ENCODE measurements at regions of chr9 and their contacts with region 1.

Region 1: DNA sequence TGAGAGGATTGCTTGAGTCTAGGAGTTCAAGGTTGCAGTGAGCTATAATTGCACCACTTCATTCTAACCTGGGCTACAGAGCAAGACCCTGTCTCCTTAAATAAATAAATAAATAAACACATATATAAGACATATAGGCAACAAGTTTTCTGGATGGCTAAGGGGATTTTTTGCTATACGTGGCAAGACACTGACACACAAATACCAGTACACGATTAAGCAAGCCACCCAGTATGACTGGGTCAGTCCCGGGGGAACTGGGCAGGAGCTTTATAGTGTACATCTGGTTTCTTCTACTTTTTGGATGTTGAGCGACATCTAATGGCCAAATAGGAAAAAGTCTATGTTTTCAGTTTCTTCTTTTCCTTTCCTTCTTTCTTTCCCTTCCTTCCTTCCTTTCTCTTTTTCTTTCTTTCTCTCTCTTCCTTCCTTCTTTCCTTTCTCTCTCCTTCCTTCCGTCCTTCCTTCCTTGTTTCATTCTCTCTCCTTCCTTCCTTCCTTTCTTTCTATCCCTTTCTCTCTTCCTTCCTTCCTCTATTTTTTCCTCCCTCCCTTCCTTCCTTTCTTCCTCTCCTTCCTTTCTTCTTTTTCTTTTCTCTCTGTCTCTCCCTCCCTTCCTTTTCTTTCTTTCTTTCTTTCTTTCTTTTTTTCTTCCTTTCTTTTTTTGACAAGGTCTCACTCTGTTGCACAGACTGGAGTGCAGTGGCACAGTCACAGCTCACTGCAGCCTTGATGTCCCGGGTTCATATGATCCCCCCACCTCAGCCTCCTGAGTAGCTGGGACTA is 47.0 kb upstream of the PLIN2 start:
- DNase-seq: peak; percentile 89
- H3K4me3 Mint-ChIP-seq: no peak overlapping the region
- H3K27ac Mint-ChIP-seq: no peak overlapping the region
- H3K4me1 Mint-ChIP-seq: peaks cover 7% of the 10 kb centered on the region
- H3K27me3 Mint-ChIP-seq: no peaks in the 10 kb centered on the region
- CTCF ChIP-seq: peak; percentile 56

Region 2: GRCh38 chr9:19085295-19085694 is 89.0 kb before region 1 on chr9:
- CTCF ChIA-PET with region 1: interaction called, 33 read pairs
- POLR2A ChIA-PET with region 1: no interaction called
- intact Hi-C with region 1: loop called (anchors 1 kb)
- DNase-seq: peak; percentile 25
- H3K4me3 Mint-ChIP-seq: no peak overlapping the region
- H3K27ac Mint-ChIP-seq: peak overlapping the region; percentile 31
- H3K4me1 Mint-ChIP-seq: peaks cover 7% of the 10 kb centered on the region
- H3K27me3 Mint-ChIP-seq: no peaks in the 10 kb centered on the region
- CTCF ChIP-seq: peak; percentile 32

Region 3: DNA sequence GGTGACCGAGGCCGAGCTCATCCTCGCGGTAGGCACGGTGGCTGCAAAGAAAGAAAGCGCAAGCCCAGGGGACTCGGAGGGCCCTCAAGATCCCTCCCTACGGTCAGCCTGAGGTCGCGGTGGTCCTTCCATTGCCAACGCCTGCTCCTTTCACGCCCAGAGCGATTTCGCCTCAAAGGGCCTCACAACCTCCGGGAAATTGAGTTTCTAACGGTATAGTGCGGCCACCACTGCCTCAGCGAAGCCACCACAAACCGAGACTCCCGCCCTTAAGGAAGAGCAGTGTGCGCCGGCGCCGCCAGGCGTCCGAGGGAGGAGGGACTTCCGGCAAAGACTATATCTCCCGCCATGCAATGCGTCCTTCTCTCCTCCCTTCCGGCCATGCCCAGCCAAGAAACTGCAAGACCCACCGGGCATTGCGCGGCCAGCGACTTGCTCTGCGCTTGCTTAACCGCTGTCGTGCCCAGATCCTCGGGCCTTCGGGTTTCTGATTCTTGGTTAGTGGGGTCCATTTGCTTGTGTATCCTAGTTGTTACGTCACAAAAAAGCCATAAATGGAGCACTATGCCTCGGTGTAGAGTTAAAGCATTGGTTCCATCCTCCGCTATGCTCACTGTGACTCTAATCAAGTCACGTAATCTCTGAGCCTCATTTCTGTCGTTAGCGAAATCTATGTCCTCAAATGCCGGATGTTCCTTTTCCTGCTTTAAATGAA is 71.5 kb before region 1 on chr9 and contains the start of gene HAUS6:
- CTCF ChIA-PET with region 1: interaction called, 7 read pairs
- POLR2A ChIA-PET with region 1: interaction called, 9 read pairs
- intact Hi-C with region 1: loop called (anchors 1 kb)
- DNase-seq: peak; percentile 97
- H3K4me3 Mint-ChIP-seq: peak within 1 kb of the TSS; percentile 88
- H3K27ac Mint-ChIP-seq: peak within 1 kb of the TSS; percentile 87
- H3K4me1 Mint-ChIP-seq: peaks cover 10% of the 10 kb centered on the region
- H3K27me3 Mint-ChIP-seq: no peaks in the 10 kb centered on the region
- CTCF ChIP-seq: no peak
- total RNA-seq, gene HAUS6: 15.8 and 16.2 TPM in 2 replicates

Region 4: GRCh38 chr9:19154135-19154612 is 20.1 kb before region 1 on chr9:
- CTCF ChIA-PET with region 1: interaction called, 10 read pairs
- POLR2A ChIA-PET with region 1: interaction called, 6 read pairs
- intact Hi-C with region 1: no loop called
- DNase-seq: peak; percentile 14
- H3K4me3 Mint-ChIP-seq: no peak overlapping the region
- H3K27ac Mint-ChIP-seq: no peak overlapping the region
- H3K4me1 Mint-ChIP-seq: peaks cover 7% of the 10 kb centered on the region
- H3K27me3 Mint-ChIP-seq: no peaks in the 10 kb centered on the region
- CTCF ChIP-seq: no peak

Region 5: DNA sequence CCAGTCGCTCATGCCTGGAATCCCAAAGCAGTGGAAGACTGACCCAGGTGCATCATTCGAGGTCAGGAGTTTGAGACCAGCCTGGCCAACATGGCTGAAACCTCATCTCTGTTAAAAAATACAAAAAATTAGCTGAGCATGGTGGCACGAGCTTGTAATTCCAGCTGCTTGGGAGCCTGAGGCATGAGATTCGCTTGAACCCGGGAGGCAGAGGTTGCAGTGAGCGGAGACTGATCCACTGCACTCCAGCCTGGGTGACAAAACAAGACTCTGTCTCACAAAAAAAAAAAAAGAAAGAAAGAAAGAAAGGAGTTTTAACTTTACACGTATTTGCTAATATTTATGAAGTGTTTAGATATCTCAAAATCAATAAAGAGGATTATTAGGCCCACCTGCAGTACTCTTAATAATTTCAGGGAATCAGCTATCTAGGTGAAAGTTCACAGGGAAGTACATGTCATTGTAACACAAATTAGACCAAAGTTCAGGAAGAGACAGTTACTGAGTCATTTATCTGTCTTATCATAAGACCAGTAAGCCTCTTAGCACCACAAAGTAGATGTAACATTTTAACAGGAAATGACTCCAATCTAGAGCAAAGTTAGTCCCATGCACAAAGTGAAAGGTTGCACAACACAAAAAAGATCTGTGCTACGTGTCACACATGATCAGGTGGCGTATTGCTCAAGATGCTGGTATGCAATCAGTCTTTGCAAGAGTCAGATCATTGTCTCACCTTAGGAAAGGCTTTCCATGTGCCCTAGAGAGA is 12.9 kb before region 1 on chr9:
- CTCF ChIA-PET with region 1: interaction called, 13 read pairs
- POLR2A ChIA-PET with region 1: interaction called, 4 read pairs
- intact Hi-C with region 1: no loop called
- DNase-seq: peak; percentile 96
- H3K4me3 Mint-ChIP-seq: peak overlapping the region; percentile 11
- H3K27ac Mint-ChIP-seq: peak overlapping the region; percentile 94
- H3K4me1 Mint-ChIP-seq: peaks cover 17% of the 10 kb centered on the region
- H3K27me3 Mint-ChIP-seq: no peaks in the 10 kb centered on the region
- CTCF ChIP-seq: no peak

Region 6: GRCh38 chr9:19184144-19184917 is 10.0 kb after region 1 on chr9:
- CTCF ChIA-PET with region 1: interaction called, 8 read pairs
- POLR2A ChIA-PET with region 1: interaction called, 18 read pairs
- intact Hi-C with region 1: no loop called
- DNase-seq: peak; percentile 74
- H3K4me3 Mint-ChIP-seq: peak overlapping the region; percentile 38
- H3K27ac Mint-ChIP-seq: peak overlapping the region; percentile 98
- H3K4me1 Mint-ChIP-seq: peaks cover 13% of the 10 kb centered on the region
- H3K27me3 Mint-ChIP-seq: no peaks in the 10 kb centered on the region
- CTCF ChIP-seq: no peak

Region 7: DNA sequence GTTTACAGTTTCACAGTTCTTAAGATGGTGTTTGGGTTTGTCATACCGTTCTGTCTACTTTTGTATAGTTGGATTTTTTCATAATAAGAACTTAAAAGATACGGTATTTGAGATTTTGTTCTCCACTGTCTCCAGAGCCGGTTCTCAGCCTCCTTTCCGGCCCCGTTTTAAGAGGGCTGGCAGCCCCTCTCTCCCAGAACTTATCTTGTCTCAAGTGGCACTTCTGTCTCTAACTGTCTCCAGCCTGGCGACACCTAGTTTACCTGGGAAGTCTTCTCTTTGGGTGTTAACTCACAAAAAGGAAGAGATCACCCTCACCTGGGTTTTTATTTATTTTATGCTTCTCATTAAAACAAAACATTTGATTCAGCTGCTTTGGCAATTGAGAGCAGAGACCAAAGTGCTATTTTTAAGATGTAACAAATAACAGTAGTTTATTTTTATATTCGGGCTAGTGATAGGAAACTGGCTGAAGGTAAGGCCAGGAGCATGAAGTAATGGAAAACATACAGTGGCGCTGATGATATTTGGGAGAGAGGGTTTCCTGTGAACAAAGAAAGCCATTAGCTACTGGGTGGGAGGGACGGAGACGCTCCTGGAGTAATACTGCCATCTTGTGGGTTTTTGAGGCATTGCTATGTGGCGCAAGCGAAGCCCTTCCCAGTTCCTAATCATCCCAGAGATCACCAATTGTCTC is 282.8 kb after region 1 on chr9:
- CTCF ChIA-PET with region 1: interaction called, 8 read pairs
- POLR2A ChIA-PET with region 1: no interaction called
- intact Hi-C with region 1: loop called (anchors 5 kb)
- DNase-seq: peak; percentile 80
- H3K4me3 Mint-ChIP-seq: peak overlapping the region; percentile 33
- H3K27ac Mint-ChIP-seq: no peak overlapping the region
- H3K4me1 Mint-ChIP-seq: no peaks in the 10 kb centered on the region
- H3K27me3 Mint-ChIP-seq: no peaks in the 10 kb centered on the region
- CTCF ChIP-seq: peak; percentile 91